ENCODE measurements at regions of chr1 and their contacts with region 1.

Region 1: DNA sequence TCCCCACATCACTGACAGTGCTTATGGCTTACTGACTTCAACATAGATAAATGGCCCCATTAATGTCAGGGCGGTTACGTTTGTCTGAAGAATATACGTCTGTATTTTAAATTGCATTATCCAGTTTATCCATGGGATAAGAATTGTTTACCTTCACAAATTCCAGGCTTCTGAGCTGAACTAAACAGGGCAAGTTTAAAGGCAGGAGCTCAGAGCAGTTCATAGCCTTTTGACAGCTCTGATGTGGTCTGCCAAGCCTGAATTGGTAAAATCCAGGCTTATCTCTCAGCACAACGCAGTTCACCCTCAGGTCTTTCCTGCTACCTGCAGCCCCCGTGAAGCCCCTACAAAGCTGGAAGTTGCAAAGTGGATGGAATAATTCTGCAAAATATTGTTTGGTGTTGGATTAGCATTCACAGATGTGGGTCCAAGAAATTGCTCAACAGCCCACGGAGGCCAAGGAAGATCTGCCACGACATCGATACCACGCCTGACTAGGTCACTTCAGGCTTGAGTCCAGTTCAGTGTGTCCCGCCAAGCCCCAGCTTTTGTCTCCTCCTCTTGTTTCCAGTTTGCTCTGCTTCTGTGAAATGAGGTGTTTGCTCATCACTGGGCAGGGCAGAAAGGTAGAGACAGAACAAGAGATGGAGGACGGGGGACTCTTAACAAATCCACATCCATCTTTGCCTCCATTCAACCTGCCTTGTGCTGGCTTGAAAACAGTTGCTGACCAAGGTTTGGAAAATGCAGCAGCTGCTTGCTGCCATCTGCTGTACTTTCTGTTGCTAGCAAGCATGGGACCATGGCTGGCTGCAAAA is 79.8 kb upstream of the GREM2 start:
- DNase-seq: peak; percentile 38
- H3K4me3 Mint-ChIP-seq: no peak overlapping the region
- H3K27ac Mint-ChIP-seq: no peak overlapping the region
- H3K4me1 Mint-ChIP-seq: no peaks in the 10 kb centered on the region
- H3K27me3 Mint-ChIP-seq: no peaks in the 10 kb centered on the region
- CTCF ChIP-seq: peak; percentile 41

Region 2: DNA sequence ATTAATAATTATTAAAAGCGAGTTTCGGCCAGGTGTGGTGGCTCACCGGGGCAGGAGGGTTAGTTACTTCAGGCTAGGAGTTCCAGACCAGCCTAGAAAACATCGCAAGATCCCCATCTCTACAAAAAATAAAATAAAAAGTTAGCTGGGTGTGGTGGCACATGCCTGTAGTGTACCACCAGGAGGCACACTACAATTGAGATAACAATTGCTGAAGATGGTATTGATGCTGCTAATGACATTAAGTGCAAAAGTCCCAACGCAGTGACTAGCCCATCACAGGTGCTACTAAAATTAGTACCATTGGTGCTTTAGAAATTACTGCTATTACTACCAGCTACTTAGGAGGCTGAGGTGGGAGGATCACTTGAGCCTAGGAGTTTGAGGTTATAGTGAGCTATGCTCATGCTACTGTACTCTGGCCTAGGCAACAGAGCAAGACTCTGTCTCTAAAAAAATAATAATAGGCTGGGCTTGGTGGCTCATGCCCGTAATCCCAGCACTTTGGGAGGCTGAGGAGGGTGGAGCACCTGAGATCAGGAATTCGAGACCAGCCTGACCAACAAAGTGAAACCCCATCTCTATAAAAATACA is 236.4 kb before region 1 on chr1:
- CTCF ChIA-PET with region 1: interaction called, 10 read pairs
- intact Hi-C with region 1: loop called (anchors 2 kb)
- DNase-seq: peak; percentile 27
- H3K4me3 Mint-ChIP-seq: no peak overlapping the region
- H3K27ac Mint-ChIP-seq: no peak overlapping the region
- H3K4me1 Mint-ChIP-seq: no peaks in the 10 kb centered on the region
- H3K27me3 Mint-ChIP-seq: no peaks in the 10 kb centered on the region
- CTCF ChIP-seq: peak; percentile 37